ENCODE measurements at regions of chr7 and their contacts with region 1.

Region 1: GRCh38 chr7:50595491-50596102 is 30.4 kb upstream of the DDC start:
- DNase-seq: no peak
- H3K4me3 Mint-ChIP-seq: no peak overlapping the region
- H3K27ac Mint-ChIP-seq: peak overlapping the region; percentile 75
- H3K4me1 Mint-ChIP-seq: peaks cover 58% of the 10 kb centered on the region
- H3K27me3 Mint-ChIP-seq: no peaks in the 10 kb centered on the region

Region 2: GRCh38 chr7:50449881-50450589 is 145.6 kb before region 1 on chr7 and contains the start of gene FIGNL1:
- intact Hi-C with region 1: loop called (anchors 5 kb)
- DNase-seq: peak; percentile 81
- H3K4me3 Mint-ChIP-seq: peak within 1 kb of the TSS; percentile 86
- H3K27ac Mint-ChIP-seq: peak within 1 kb of the TSS; percentile 71
- H3K4me1 Mint-ChIP-seq: peaks cover 41% of the 10 kb centered on the region
- H3K27me3 Mint-ChIP-seq: no peaks in the 10 kb centered on the region
- total RNA-seq, gene FIGNL1: 40.0 and 42.5 TPM in 2 replicates

Region 3: GRCh38 chr7:50534690-50535290 is 60.8 kb before region 1 on chr7:
- intact Hi-C with region 1: loop called (anchors 5 kb)
- DNase-seq: no peak
- H3K4me3 Mint-ChIP-seq: no peak overlapping the region
- H3K27ac Mint-ChIP-seq: no peak overlapping the region
- H3K4me1 Mint-ChIP-seq: peaks cover 31% of the 10 kb centered on the region
- H3K27me3 Mint-ChIP-seq: peaks cover 1% of the 10 kb centered on the region

Region 4: DNA sequence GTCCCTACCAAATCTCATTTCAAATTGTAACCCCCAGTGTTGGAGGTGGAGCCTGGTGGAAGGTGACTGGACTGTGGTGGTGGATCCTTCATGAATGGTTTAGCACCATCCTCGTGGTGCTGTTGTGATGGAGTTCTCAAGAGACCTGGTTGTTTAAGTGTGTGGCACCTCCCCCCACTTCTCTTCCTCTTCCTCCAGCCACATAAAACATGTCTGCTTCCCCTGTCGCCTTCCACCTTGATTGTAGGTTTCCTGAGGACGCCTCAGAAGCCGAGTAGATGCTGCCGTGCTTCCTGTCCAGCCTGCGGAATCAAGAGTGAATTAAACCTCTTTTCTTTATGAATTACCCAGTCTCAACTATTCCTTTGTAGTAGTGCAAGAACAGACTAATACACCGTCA is 166.1 kb after region 1 on chr7:
- intact Hi-C with region 1: no loop called
- DNase-seq: no peak
- H3K4me3 Mint-ChIP-seq: no peak overlapping the region
- H3K27ac Mint-ChIP-seq: no peak overlapping the region
- H3K4me1 Mint-ChIP-seq: peaks cover 9% of the 10 kb centered on the region
- H3K27me3 Mint-ChIP-seq: peaks cover 2% of the 10 kb centered on the region

Region 5: DNA sequence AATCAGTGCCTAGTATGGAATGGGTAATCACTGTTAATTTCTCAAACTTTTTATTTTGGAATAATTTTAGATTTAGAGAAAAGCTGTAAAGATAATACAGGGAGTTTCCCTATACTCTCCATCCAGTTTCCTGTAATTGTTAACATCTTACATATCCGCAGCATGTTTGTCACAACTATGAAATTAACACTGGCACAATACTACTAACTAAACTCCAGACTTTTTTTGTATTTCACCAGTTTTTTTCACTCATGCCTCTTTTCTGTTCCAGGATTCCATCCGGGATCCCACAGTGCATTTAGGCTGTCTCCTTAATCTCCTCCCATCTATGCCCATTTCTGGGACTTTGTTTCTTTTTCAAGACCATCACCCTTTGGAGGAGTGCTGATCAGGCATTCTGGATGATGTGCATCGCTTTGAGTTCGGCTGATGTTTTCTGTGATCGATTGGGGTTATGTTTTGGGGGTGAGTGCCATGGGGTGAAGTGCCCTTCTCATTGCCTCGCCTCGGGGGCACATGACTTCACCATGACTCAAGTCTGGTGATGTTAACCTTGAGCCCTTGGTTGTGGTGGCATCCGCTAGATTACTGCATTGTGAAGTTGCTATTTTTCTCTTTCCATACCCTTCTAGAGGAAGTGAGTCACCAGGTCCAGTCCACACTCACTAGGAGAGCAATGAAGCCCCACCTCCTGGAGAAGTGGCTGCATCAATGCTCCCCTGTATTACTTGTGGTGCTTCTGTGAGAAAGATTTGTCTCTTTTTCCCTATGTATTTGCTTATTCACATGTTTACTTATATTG is 231.0 kb after region 1 on chr7:
- intact Hi-C with region 1: loop called (anchors 10 kb)
- DNase-seq: peak; percentile 40
- H3K4me3 Mint-ChIP-seq: no peak overlapping the region
- H3K27ac Mint-ChIP-seq: peak overlapping the region; percentile 71
- H3K4me1 Mint-ChIP-seq: peaks cover 27% of the 10 kb centered on the region
- H3K27me3 Mint-ChIP-seq: peaks cover 13% of the 10 kb centered on the region

Region 6: GRCh38 chr7:51034521-51035264 is 439.1 kb after region 1 on chr7:
- intact Hi-C with region 1: no loop called
- DNase-seq: no peak
- H3K4me3 Mint-ChIP-seq: no peak overlapping the region
- H3K27ac Mint-ChIP-seq: no peak overlapping the region
- H3K4me1 Mint-ChIP-seq: no peaks in the 10 kb centered on the region
- H3K27me3 Mint-ChIP-seq: peaks cover 5% of the 10 kb centered on the region